Activated T-helper 2 cell treated with anti-CD3 and anti-CD28 coated beads, Interferon-gamma antibody, Interleukin-2, Interleukin-4, amounts not matched to agents 10 μg/mL and 5 μg/mL and 100 μg/mL, durations not matched to agents 14 hours and 24 hours and 36 hours (primary cell): ENCODE measurements at regions of chr2 and their contacts with region 1.

Region 1: GRCh38 chr2:37324786-37325624 is at the start of gene PRKD3:
- DNase-seq: peak; percentile 34
- H3K4me3 Mint-ChIP-seq: peak within 1 kb of the TSS; percentile 94
- H3K27ac Mint-ChIP-seq: peak within 1 kb of the TSS; percentile 90
- H3K4me1 Mint-ChIP-seq: peaks cover 33% of the 10 kb centered on the region
- H3K27me3 Mint-ChIP-seq: peaks cover 51% of the 10 kb centered on the region
- total RNA-seq, gene PRKD3: 11.9 and 14.0 TPM in 2 replicates

Region 2: DNA sequence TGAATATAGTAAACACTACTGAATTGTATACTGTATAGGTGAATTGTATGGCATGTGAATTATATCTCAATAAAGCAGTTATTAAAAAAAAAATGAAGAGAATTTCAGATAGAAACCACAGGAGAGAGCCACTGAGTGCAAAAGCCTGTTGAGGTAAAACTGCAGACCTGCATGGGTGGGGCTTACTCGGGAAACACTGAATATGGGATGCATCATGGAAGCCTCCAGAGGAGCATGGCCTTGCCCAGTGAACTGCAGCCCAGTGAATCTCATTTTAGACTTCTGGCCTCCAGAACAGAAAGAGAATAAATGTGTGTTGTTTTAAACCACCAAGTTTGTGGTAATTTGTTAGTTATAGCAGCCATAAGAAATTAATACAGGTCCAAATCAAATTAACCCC is 225.0 kb before region 1 on chr2:
- intact Hi-C with region 1: no loop called
- DNase-seq: no peak
- H3K4me3 Mint-ChIP-seq: no peak overlapping the region
- H3K27ac Mint-ChIP-seq: no peak overlapping the region
- H3K4me1 Mint-ChIP-seq: no peaks in the 10 kb centered on the region
- H3K27me3 Mint-ChIP-seq: no peaks in the 10 kb centered on the region

Region 3: DNA sequence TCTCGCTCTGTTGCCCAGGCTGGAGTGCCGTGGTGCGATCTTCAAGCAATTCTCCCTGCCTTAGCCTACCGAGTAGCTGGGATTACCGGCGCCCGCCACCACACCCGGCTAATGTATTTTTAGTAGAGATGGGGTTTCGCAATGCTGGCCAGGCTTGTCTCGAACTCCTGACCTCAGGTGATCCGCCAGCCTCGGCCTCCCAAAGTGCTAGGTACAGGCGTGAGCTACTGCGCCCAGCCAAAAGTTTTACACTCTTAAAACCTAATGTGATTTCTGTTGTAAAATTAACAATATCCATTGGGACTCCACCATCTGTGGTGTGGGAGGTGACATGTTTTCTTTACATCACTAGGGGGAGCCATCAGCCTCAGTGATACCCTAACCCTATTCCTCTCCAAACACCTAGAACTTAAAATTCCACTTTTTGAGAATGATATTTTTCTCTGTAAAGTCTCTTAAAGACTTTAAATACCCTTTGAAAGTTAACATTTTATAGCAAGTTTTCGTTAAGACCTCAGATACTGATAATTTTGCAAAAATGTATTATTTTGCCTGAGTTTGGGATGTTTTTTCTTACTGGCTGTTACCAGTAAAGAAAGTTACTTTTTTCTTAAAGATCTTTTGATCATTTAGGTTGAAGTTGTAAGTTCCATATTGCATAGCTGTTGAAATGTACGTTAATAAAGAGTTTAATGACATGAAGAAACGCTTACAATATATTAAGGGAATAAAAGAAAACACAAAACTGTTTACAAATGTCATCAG is 156.6 kb before region 1 on chr2:
- intact Hi-C with region 1: loop called (anchors 1 kb)
- DNase-seq: no peak
- H3K4me3 Mint-ChIP-seq: no peak overlapping the region
- H3K27ac Mint-ChIP-seq: no peak overlapping the region
- H3K4me1 Mint-ChIP-seq: peaks cover 1% of the 10 kb centered on the region
- H3K27me3 Mint-ChIP-seq: peaks cover 2% of the 10 kb centered on the region

Region 4: DNA sequence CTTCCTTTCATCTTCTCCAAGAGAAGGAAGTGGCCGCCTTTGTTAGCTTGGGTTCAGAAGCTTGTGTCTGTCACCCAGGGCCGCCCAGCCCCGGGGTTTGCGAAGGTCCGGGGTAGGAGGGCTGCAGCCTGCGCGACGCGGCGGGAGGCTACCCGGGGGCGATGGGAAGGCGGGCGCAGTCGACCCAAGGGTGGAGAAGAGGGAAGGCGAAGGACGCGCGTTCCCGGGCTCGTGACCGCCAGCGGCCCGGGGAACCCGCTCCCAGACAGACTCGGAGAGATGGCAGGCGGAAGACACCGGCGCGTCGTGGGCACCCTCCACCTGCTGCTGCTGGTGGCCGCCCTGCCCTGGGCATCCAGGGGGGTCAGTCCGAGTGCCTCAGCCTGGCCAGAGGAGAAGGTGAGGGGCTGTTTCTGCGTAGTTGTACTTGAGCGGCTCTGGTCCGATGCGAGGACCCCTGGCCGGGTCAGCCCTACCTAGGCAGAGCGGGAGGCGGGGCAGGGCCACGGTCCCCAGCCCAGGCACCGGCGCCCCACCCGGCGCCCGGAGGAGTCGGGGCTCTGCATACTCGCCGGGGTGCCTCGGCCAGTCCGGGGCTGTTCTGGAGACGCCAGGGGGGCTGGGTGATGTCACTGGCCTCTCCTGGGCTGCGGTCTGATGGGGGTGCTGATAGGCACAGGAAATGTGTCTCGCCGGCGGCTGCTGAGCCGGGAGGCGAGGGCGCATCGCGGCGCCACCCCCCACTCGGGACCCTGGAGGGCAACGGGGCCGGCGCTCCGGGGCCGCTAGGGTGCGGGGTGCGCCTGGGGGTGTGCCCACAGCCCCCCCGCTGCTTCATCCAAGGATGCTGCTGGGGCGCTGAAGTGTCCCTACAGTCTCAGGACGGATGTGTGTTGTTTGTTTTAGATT is 19.7 kb after region 1 on chr2 and contains the start of gene QPCT:
- intact Hi-C with region 1: loop called (anchors 2 kb)
- DNase-seq: peak; percentile 29
- H3K4me3 Mint-ChIP-seq: peak within 1 kb of the TSS; percentile 70
- H3K27ac Mint-ChIP-seq: no peak within 1 kb of the TSS
- H3K4me1 Mint-ChIP-seq: peaks cover 15% of the 10 kb centered on the region
- H3K27me3 Mint-ChIP-seq: peaks cover 76% of the 10 kb centered on the region
- total RNA-seq, gene QPCT: 0.48 and 0.71 TPM in 2 replicates